ENCODE measurements at regions of chr4 and their contacts with region 1.

Region 1: DNA sequence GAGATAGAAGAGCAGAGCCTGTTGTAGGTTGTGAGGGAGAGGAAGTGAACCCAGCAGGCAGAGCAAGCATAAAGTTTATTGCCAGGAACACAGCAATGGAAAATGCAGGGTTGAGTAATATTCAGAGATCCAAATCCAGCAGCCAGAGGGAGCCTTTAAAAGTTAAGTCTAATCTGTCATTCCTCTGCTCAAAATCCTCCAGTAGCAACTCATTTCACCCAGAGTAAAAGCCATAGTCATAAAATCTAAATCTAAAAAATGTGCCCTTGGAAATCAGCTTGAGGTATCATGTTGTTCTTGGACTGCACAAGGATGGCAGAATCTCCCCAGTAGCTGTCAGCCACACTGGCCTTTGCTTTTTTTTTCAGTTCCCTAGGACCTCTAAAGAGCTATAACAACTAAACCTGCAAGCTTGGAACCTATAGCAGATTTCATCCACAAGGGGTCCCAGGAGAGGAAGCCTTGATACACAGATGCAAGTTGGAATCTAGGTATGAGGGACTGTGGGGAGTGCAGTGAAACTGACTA is 62.9 kb upstream of the FRAS1 start:
- DNase-seq: peak; percentile 56
- ATAC-seq: peak; percentile 99
- H3K4me3 Mint-ChIP-seq: no peak overlapping the region
- H3K27ac Mint-ChIP-seq: no peak overlapping the region; the same call in 1 of the 2 replicates
- H3K4me1 Mint-ChIP-seq: peaks cover 44% of the 10 kb centered on the region
- H3K27me3 Mint-ChIP-seq: no peaks in the 10 kb centered on the region
- CTCF ChIP-seq: peak; percentile 51

Region 2: DNA sequence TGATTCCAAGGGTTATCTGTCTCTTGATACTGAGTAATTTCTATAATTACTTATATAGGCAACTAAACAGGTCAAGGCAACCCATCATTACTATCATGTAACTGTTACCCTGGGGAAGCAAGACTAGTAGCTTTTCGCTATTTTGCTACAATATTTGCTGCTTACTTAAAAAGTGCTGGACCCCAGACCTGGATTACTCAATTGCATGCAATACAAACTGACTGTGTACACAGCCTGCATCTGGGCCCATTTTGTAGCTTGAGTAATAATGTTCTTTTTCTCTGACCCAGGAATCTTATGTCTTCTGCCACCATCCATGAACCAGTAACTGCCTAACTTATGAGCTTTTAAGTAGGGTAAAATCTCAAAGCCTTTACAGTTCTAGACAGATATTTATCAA is 228.5 kb before region 1 on chr4:
- CTCF ChIA-PET with region 1: no interaction called
- POLR2A ChIA-PET with region 1: no interaction called
- DNase-seq: no peak
- ATAC-seq: no peak
- H3K4me3 Mint-ChIP-seq: no peak overlapping the region
- H3K27ac Mint-ChIP-seq: no peak overlapping the region
- H3K4me1 Mint-ChIP-seq: peaks cover 3% of the 10 kb centered on the region
- H3K27me3 Mint-ChIP-seq: no peaks in the 10 kb centered on the region; the same call in 1 of the 2 replicates
- CTCF ChIP-seq: no peak

Region 3: GRCh38 chr4:78092850-78093249 is 98.6 kb after region 1 on chr4:
- CTCF ChIA-PET with region 1: interaction called, 10 read pairs
- POLR2A ChIA-PET with region 1: no interaction called
- DNase-seq: no peak
- ATAC-seq: peak; percentile 90
- H3K4me3 Mint-ChIP-seq: peak overlapping the region; percentile 53
- H3K27ac Mint-ChIP-seq: peak overlapping the region; percentile 100
- H3K4me1 Mint-ChIP-seq: peaks cover 44% of the 10 kb centered on the region
- H3K27me3 Mint-ChIP-seq: no peaks in the 10 kb centered on the region
- CTCF ChIP-seq: no peak

Region 4: GRCh38 chr4:78369679-78370078 is 375.4 kb after region 1 on chr4:
- CTCF ChIA-PET with region 1: no interaction called
- POLR2A ChIA-PET with region 1: no interaction called
- DNase-seq: peak; percentile 52
- ATAC-seq: peak; percentile 87
- H3K4me3 Mint-ChIP-seq: peak overlapping the region; percentile 10
- H3K27ac Mint-ChIP-seq: peak overlapping the region; percentile 67; the same call in 1 of the 2 replicates
- H3K4me1 Mint-ChIP-seq: peaks cover 43% of the 10 kb centered on the region
- H3K27me3 Mint-ChIP-seq: no peaks in the 10 kb centered on the region
- CTCF ChIP-seq: no peak

Measured in WTC11 (cell line).